ENCODE measurements at regions of chr13 and their contacts with region 1.

Region 1: DNA sequence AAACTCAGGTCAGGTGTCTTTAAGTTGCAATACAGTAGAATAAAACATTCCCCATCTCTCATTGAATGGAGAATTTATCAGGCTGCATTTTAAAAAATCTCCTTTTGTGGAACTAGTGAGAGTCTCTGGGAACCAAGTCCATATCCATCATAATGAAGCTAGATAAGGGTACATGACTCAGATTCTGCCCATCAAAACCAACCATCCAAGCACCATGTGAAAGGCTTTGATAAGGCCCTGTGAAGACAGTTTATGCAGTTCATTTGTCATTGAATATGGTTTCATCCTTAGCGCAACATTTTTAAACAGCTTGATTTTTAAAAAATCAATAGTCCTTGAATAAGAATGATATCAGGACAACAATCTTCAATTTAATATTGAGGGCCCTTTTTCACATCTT is 56.3 kb upstream of the DIAPH3 start:
- DNase-seq: no peak
- H3K4me3 ChIP-seq: no peak overlapping the region
- H3K27ac ChIP-seq: no peak overlapping the region
- H3K4me1 ChIP-seq: no peaks in the 10 kb centered on the region
- H3K27me3 ChIP-seq: peaks cover 34% of the 10 kb centered on the region
- CTCF ChIP-seq: no peak

Region 2: GRCh38 chr13:59686798-59687394 is 533.2 kb before region 1 on chr13:
- CTCF ChIA-PET with region 1: no interaction called
- POLR2A ChIA-PET with region 1: no interaction called
- intact Hi-C with region 1: loop called (anchors 5 kb)
- DNase-seq: no peak
- H3K4me3 ChIP-seq: no peak overlapping the region
- H3K27ac ChIP-seq: no peak overlapping the region
- H3K4me1 ChIP-seq: peaks cover 8% of the 10 kb centered on the region
- H3K27me3 ChIP-seq: no peaks in the 10 kb centered on the region
- CTCF ChIP-seq: no peak

Measured in PC-9 (cell line).